Activated T-helper 1 cell treated with anti-CD3 and anti-CD28 coated beads, Interleukin-12 subunit alpha, Interleukin-12 subunit beta, Interleukin-2, Interleukin-4 antibody, amounts not matched to agents 30 ng/mL and 10 ng/mL and 1 ng/mL, durations not matched to agents 14 hours and 24 hours and 36 hours (primary cell): ENCODE measurements at regions of chr2 and their contacts with region 1.

Region 1: DNA sequence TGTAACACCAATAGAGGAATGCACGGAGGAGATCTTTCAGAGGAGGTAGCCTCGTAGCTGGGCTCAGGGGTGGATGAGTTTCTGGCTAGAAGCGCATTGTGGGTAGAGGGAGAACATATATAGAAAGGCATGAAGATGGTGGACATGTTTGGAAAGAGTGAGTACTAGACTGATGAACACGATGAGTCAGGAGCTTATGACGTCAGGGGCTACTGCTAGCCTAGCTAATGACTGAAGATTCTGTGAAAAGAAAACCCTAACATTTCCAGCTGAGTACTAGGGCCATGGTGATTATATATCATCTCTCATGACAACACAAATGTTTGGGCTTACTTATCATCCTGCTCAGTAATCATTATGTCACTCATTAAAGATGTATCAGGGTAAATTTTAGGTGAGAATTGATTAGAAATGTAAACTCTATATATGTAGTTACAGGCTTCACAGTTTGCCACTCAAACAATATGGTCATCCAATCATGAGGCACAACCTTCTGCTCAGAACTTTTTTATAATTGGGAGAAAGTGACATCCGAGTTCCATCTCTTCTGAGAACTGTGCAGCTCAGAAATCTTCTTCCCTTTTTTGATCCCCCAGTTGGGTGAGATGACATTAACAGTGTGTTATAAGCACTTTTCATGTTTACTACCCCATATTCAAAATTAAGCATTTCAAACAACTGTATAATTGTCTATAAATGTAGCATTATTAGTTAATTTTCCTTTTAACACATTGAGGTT is 22.2 kb upstream of the IL1RN start:
- DNase-seq: no peak
- H3K4me3 Mint-ChIP-seq: peak overlapping the region; percentile 0
- H3K27ac Mint-ChIP-seq: peak overlapping the region; percentile 96
- H3K4me1 Mint-ChIP-seq: peaks cover 65% of the 10 kb centered on the region
- H3K27me3 Mint-ChIP-seq: peaks cover 2% of the 10 kb centered on the region

Region 2: GRCh38 chr2:112803691-112804521 is 301.3 kb before region 1 on chr2:
- intact Hi-C with region 1: loop called (anchors 10 kb)
- DNase-seq: no peak
- H3K4me3 Mint-ChIP-seq: no peak overlapping the region
- H3K27ac Mint-ChIP-seq: peak overlapping the region; percentile 93
- H3K4me1 Mint-ChIP-seq: peaks cover 36% of the 10 kb centered on the region
- H3K27me3 Mint-ChIP-seq: peaks cover 2% of the 10 kb centered on the region

Region 3: GRCh38 chr2:113116100-113116958 is 11.1 kb after region 1 on chr2:
- intact Hi-C with region 1: loop called (anchors 1 kb)
- DNase-seq: no peak
- H3K4me3 Mint-ChIP-seq: peak overlapping the region; percentile 51
- H3K27ac Mint-ChIP-seq: peak overlapping the region; percentile 77
- H3K4me1 Mint-ChIP-seq: peaks cover 17% of the 10 kb centered on the region
- H3K27me3 Mint-ChIP-seq: peaks cover 5% of the 10 kb centered on the region

Region 4: DNA sequence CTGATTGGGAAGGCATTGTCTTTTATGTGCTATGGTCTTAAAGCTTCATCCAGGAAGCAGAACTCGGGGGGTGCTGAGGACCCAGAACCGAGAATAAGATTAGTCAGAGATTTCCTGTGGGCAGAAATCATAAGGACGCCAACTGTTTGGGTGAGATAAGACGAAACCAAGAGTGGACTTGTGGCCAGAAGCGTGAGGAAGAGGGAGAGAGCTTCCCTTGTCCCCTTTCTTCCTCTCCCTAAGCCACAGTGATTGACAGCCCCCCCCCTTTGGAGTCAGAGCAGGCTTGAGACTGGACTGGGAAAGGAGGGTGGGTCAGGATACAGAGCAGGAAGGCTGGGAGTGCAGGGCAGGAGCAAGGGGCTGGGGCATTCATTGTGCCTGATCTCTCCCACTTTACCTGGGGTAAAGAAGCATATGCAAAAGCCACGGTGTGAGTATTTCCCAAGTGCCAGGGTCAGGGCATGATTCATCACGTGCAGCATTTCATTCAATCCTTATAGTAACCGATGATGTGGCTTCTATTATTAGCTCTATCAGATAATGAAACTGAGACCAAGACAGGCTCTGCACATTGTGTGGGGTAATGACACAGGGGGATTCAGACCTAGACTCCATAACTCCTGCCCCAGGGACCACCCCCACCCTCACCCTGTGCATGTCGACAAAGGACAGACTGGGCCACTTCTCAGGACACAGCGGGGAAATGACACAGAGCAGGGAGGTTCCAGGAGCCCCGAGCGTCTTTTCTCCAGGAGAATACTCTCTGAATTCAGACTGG is 19.2 kb after region 1 on chr2:
- intact Hi-C with region 1: loop called (anchors 2 kb)
- DNase-seq: no peak
- H3K4me3 Mint-ChIP-seq: peak overlapping the region; percentile 29
- H3K27ac Mint-ChIP-seq: no peak overlapping the region
- H3K4me1 Mint-ChIP-seq: peaks cover 59% of the 10 kb centered on the region
- H3K27me3 Mint-ChIP-seq: peaks cover 7% of the 10 kb centered on the region

Region 5: DNA sequence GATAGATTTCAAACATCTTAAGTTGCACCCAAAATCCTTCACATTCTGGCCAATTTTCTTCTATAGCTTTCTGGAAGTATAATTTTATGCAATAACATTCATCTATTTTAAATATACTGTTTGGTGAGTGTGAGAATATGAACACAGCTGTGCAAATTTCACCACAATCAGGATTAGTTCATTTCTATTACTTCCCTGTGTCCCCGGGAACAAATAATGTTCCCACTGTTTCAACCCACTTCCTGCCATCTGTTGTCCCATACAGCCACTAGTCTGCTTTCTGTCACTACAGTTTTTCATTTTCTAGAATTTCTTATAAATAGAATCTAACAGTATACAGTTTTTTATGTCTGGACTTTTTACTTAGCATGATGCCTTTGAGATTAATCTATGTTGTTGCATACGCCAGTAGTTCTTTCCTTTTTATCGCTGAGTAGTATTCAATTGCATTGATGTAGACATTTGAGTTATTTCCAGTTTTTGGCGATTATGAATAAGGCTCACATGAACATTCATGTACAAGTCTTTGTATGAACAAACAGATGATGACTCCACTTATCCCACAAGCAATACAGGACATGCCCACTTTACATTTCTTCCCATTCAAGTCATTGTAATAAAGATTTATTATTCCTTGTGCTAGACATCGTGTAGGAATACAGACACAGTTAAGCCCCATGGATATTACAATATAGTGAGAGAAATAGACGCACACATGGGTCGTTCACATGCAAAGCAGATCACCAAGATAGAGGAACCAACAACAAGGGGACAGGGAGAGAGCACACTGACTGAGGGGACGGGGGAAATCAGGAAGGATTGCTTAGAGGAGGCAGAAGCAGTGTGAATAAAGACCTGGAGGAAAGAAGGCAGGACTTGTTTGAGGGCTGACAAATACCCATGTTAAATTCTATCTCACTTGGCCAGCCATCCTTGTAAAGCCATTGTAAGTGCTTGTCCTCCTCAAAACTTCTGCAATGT is 246.4 kb after region 1 on chr2:
- intact Hi-C with region 1: no loop called
- DNase-seq: no peak
- H3K4me3 Mint-ChIP-seq: no peak overlapping the region
- H3K27ac Mint-ChIP-seq: no peak overlapping the region
- H3K4me1 Mint-ChIP-seq: no peaks in the 10 kb centered on the region
- H3K27me3 Mint-ChIP-seq: peaks cover 12% of the 10 kb centered on the region

Region 6: DNA sequence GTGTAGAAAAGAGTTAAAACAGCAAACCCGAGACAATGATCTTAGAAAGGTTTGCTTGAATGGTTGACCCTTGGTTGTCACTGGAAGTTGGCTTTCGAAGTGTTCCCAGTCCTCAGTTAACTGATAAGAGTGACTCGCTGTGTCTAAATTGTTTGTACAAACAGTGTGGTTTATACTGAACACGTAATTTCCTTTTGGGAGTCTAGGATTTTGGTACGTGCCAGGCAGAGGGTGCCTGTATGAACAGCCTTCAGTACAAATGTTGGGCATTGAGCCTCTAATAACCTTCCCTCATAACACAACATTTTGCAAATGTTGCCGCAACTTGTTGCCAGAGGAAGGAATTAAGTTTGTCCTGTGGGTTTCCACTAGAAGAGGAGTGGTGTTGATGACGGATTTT is 1241.4 kb after region 1 on chr2:
- intact Hi-C with region 1: no loop called
- DNase-seq: no peak
- H3K4me3 Mint-ChIP-seq: no peak overlapping the region
- H3K27ac Mint-ChIP-seq: no peak overlapping the region
- H3K4me1 Mint-ChIP-seq: no peaks in the 10 kb centered on the region
- H3K27me3 Mint-ChIP-seq: no peaks in the 10 kb centered on the region